ENCODE measurements at regions of chr3 and their contacts with region 1.

Region 1: DNA sequence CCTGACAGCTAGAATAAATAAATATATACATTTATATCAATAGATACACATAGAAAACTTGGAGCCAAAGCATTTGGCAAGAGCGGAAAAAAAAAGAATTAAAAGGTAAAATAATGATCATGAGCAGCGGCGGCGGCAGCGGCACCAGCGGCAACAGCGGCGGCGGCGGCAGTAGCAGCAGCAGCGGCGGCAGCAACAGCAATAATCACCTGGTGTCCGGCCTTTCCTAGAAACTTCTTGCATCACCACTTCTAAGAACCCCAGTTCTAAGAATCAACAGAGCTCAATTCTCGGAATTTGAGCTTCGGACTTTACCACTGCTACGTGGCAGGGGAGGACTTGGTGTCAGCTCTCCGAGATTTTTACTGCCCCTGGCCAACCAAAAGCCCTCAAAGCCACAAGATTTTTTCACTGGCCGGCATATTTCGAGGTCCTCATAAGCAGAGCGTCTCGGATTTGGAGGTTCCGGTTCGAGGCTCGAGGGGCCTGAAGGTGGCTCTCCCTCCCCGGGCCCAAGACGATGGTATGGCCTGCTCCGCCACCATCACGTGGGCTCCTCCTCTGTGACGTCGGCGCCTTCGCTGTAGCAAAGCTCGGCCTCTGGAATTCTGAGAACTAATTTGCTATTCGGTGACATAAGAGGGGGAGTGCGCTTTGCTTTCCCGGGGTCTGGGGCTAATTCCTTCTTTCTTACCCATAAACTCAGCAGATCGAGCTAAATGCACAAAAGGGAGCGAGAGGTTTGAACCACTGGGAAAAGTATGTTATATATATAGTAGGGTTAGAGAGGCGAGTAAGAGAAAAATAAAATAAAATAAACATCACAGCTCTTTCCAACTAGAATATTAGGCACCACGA is at the start of gene BCL6:
- DNase-seq: peak; percentile 91 to 95 (median 93)
- ATAC-seq: peak; percentile 79
- H3K4me3 ChIP-seq: peak within 1 kb of the TSS; percentile 45
- H3K4me1 ChIP-seq: peaks cover 37% of the 10 kb centered on the region
- CTCF ChIP-seq: no peak
- total RNA-seq, gene BCL6: 10.9 to 133 (median 23.8) TPM

Region 2: GRCh38 chr3:187507268-187507667 is 238.2 kb before region 1 on chr3:
- intact Hi-C with region 1: no loop called
- DNase-seq: no peak
- ATAC-seq: no peak
- H3K4me3 ChIP-seq: no peak overlapping the region
- H3K4me1 ChIP-seq: no peaks in the 10 kb centered on the region
- CTCF ChIP-seq: no peak

Region 3: GRCh38 chr3:188154014-188154808 is 408.8 kb after region 1 on chr3 and contains the start of gene LPP:
- intact Hi-C with region 1: loop called in 1 of 2 experiments (anchors 10 kb)
- DNase-seq: peak; percentile 78 to 90 (median 89)
- ATAC-seq: peak; percentile 81
- H3K4me3 ChIP-seq: peak within 1 kb of the TSS; percentile 74
- H3K4me1 ChIP-seq: peaks cover 38% of the 10 kb centered on the region
- CTCF ChIP-seq: no peak
- total RNA-seq, gene LPP: 262 to 816 (median 325) TPM

Region 4: DNA sequence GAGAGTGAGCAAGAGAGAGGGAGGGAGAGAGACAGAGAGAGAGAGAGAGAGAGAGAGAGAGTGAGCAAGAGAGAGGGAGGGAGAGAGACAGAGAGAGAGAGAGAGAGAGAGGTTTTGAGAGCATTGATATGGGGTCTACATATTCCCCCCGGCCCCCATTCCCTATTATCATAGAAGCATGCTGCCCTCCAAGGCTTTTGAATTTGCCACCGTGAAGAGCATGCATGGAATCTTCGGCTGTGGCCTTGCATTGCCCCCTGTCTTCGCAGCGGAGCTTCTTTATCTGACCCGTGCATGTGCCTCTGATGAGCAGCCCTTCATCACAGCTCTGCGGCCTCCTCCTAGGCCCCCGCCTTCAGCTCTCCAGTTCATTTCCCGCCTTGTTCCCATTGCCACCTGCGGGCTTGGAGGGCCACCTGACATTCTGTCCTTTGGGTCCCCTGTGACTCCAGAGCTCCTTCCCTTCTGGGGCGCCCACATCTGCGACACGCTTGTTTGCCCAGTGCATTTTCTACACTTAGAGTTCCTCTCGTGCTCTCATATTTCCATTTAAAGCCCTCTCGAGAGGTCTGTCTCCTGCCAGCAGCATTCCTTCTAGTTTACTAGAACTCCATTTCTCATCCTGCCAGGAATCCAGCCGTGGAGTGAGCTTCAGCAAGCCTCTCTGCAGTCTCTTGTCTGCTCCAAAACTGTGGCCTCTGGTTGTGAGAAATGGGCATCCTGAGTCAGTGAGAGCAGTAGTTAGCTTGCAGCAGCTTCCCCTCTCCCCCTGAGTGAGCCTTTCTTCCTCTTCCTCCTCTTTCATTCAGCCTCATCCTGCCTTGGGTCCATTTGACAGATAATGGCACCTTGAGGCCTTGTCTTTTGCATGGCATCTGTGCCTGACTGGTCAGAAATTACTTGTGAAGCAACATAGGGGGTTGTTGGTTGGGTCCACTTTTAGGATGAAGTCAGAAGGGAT is 433.9 kb after region 1 on chr3:
- intact Hi-C with region 1: loop called in 1 of 2 experiments (anchors 10 kb)
- DNase-seq: no peak
- ATAC-seq: no peak
- H3K4me3 ChIP-seq: no peak overlapping the region
- H3K4me1 ChIP-seq: peaks cover 54% of the 10 kb centered on the region
- CTCF ChIP-seq: no peak

Region 5: GRCh38 chr3:188262913-188263683 is 517.7 kb after region 1 on chr3:
- intact Hi-C with region 1: loop called in 1 of 2 experiments (anchors 10 kb)
- DNase-seq: no peak
- ATAC-seq: peak; percentile 73
- H3K4me3 ChIP-seq: no peak overlapping the region
- H3K4me1 ChIP-seq: peaks cover 29% of the 10 kb centered on the region
- CTCF ChIP-seq: no peak

Region 6: GRCh38 chr3:189148081-189148507 is 1402.7 kb after region 1 on chr3:
- intact Hi-C with region 1: loop called in 1 of 2 experiments (anchors 10 kb)
- DNase-seq: peak in 2 of 3 donors; percentile 56 to 79
- ATAC-seq: peak; percentile 86
- H3K4me3 ChIP-seq: no peak overlapping the region
- H3K4me1 ChIP-seq: no peaks in the 10 kb centered on the region
- CTCF ChIP-seq: peak; percentile 43

Measured in mucosa of descending colon (tissue), 3 donors.